Panc1 (cell line): ENCODE measurements at regions of chr7 and their contacts with region 1.

Region 1: DNA sequence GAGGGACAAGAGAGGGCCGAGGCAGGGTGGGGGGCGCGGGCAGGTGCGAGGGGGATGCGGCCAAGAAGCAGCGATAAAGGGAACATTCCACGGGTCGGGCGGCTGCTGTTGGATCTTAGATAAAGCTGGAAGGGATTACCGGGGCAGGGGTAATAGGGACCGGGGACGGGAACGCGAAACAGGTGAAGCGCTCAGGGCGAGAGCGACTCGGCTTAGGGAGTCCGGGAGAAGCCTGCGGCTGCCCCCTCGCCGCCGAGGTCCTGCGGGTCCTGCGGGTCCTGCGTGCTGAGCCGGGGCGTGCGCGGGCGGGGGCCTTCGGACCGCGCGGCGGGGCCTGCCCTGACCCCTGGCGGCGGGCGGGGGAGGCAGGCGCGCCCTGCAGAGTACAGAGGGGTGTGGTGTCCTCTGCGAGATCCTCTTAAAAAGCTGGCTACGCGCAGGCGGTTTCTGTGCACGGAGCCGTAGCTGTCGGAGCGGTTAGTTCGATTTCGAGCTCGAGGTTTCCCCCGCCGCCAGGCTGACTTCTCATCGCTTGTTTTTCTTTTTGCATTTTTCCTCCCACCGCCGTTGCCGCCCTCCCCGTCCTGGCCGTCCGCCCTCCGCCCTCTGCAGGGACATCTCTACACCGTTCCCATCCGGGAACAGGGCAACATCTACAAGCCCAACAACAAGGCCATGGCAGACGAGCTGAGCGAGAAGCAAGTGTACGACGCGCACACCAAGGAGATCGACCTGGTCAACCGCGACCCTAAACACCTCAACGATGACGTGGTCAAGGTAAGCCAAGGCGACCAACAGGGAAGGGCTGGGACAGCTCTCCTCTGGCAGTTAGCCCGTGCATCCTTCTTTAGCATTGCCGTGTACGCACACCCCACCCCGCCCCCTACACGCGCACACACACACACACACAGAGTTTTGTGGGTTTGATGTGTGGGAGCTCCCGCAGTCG is 1.4 kb downstream of the CAV1 start:
- DNase-seq: no peak
- ATAC-seq: peak; percentile 77
- H3K4me3 ChIP-seq: peak overlapping the region; percentile 78 to 90
- H3K27ac ChIP-seq: peak overlapping the region; percentile 99
- H3K4me1 ChIP-seq: peaks cover 67% of the 10 kb centered on the region
- H3K27me3 ChIP-seq: no peaks in the 10 kb centered on the region
- CTCF ChIP-seq: peak; percentile 98

Region 2: GRCh38 chr7:116354546-116355408 is 171.4 kb before region 1 on chr7:
- CTCF ChIA-PET with region 1: no interaction called
- POLR2A ChIA-PET with region 1: interaction called, 7 read pairs
- in situ Hi-C with region 1: no loop called
- intact Hi-C with region 1: loop called (anchors 5 kb)
- DNase-seq: peak; percentile 98
- ATAC-seq: peak; percentile 92
- H3K4me3 ChIP-seq: peak overlapping the region; percentile 12 to 49
- H3K27ac ChIP-seq: peak overlapping the region; percentile 100
- H3K4me1 ChIP-seq: peaks cover 49% of the 10 kb centered on the region
- H3K27me3 ChIP-seq: no peaks in the 10 kb centered on the region
- CTCF ChIP-seq: no peak

Region 3: GRCh38 chr7:116426428-116427156 is 99.6 kb before region 1 on chr7:
- CTCF ChIA-PET with region 1: no interaction called
- POLR2A ChIA-PET with region 1: interaction called, 3 read pairs
- in situ Hi-C with region 1: no loop called
- intact Hi-C with region 1: loop called (anchors 10 kb)
- DNase-seq: peak; percentile 93
- ATAC-seq: peak; percentile 91
- H3K4me3 ChIP-seq: 0 out of 4 replicates have a peak overlapping the region, but pooled peaks of 1 of the 2 experiments have one; percentile 4
- H3K27ac ChIP-seq: peak overlapping the region; percentile 96
- H3K4me1 ChIP-seq: peaks cover 49% of the 10 kb centered on the region
- H3K27me3 ChIP-seq: no peaks in the 10 kb centered on the region
- CTCF ChIP-seq: no peak

Region 4: GRCh38 chr7:116511552-116512519 is 14.4 kb before region 1 on chr7:
- CTCF ChIA-PET with region 1: interaction called, 4 read pairs
- POLR2A ChIA-PET with region 1: interaction called, 13 read pairs
- in situ Hi-C with region 1: no loop called
- intact Hi-C with region 1: no loop called
- DNase-seq: peak; percentile 96
- ATAC-seq: peak; percentile 75
- H3K4me3 ChIP-seq: peak overlapping the region; percentile 39 to 66
- H3K27ac ChIP-seq: peak overlapping the region; percentile 99
- H3K4me1 ChIP-seq: peaks cover 77% of the 10 kb centered on the region
- H3K27me3 ChIP-seq: no peaks in the 10 kb centered on the region
- CTCF ChIP-seq: no peak